ENCODE measurements at regions of chr18 and their contacts with region 1.

Region 1: DNA sequence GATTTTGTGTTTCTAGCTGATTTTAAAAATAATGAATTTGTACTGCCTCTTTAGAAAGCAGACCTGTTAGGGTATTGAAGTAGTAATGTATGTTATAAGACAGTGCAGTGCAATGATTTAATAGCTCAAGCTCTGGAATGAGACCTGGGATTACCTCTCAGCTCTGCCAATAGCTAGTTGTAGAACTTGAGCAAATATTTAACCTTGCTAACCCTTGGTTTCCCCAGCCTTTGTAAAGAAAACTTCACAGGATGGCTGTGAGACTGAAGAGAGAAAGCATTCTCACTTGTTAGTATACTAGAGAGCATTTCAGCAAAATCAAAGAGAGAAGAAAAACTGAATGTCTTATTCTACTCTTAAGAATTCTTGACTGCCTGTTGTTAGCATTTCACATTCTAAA is 293.9 kb downstream of the KIAA1328 start:
- DNase-seq: no peak
- H3K4me3 ChIP-seq: no peak overlapping the region
- H3K27ac ChIP-seq: no peak overlapping the region
- H3K4me1 ChIP-seq: no peaks in the 10 kb centered on the region
- H3K27me3 ChIP-seq: no peaks in the 10 kb centered on the region
- CTCF ChIP-seq: no peak
- EP300 ChIP-seq: no peak
- POLR2A ChIP-seq: no peak

Region 2: DNA sequence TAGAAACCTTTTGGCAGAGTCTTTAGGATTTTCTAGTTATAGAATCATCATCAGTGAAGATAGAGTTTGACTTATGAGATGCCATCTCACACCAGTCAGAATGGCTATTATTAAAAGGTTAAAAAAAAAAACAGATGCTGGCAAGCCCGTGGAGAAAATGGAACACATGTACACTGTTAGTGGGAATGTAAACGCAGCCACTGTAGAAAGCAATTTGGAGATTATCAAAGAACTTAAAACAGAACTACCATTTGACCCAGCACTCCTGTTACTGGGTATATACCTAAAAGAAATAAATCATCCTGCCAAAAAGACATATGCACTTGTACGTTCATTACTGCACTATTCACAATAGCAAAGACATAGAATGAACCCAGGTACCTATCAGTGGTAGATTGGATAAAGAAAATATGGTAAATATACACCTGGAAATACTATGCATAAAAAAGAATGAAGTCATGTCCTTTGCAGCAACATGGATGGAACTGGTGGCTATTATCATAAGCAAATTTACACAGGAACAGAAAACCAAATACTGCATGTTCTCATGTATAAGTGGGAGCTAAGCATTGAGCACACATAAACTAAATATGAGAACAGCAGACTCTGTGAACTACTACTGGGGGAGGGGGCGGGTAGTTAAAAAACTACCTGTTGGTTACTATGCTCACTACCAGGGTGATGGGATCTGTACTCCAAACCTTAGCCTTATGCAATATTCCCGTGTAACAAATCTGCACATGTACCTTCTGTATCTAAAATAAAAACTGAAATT is 14.9 kb before region 1 on chr18:
- in situ Hi-C with region 1: no loop called
- intact Hi-C with region 1: loop called (anchors 1 kb)
- DNase-seq: no peak
- H3K4me3 ChIP-seq: no peak overlapping the region
- H3K27ac ChIP-seq: no peak overlapping the region
- H3K4me1 ChIP-seq: no peaks in the 10 kb centered on the region
- H3K27me3 ChIP-seq: no peaks in the 10 kb centered on the region
- CTCF ChIP-seq: no peak
- EP300 ChIP-seq: no peak
- POLR2A ChIP-seq: no peak

Measured in transverse colon (tissue), 4 donors.